ENCODE measurements at regions of chr2 and their contacts with region 1.

Region 1: DNA sequence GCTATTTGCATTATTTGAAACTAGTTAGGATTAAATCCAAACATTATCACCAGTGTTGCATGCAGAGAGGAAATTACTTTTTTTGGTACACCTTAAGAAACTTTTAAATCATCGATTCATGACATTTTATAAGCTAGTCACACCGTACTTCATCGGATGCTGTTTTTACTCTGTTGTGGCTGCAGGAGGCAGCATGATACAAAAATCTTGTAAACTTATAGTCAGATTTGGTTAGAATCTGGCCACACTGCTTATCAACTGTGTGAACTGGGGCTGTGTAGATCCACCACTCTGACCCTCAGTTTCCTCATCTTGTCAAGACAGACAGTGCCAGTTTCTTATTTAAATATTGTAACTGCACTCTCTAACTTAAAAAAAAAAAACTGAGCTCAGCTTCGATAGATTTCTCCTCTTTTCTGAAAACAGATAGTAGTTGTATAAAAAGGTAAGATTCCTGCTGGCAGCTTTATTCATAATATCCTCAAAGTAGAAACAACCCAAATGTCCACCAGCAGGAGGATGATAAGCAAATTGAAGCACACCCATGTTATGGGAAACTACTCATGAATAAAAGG is 77.8 kb downstream of the RAPGEF4 start:
- DNase-seq: peak in 1 of 2 donors; percentile 23
- ATAC-seq: peak in 7 of 8 donors; percentile 55 to 88 (median 67)
- H3K4me3 ChIP-seq: no peak overlapping the region
- H3K27ac ChIP-seq: no peak overlapping the region
- H3K4me1 ChIP-seq: peaks cover 0 to 5% (median 0%) of the 10 kb centered on the region in 9 donors
- H3K27me3 ChIP-seq: peaks cover 0 to 12% (median 0%) of the 10 kb centered on the region in 7 donors
- CTCF ChIP-seq: peak; percentile 29 to 79 (median 56)

Region 2: DNA sequence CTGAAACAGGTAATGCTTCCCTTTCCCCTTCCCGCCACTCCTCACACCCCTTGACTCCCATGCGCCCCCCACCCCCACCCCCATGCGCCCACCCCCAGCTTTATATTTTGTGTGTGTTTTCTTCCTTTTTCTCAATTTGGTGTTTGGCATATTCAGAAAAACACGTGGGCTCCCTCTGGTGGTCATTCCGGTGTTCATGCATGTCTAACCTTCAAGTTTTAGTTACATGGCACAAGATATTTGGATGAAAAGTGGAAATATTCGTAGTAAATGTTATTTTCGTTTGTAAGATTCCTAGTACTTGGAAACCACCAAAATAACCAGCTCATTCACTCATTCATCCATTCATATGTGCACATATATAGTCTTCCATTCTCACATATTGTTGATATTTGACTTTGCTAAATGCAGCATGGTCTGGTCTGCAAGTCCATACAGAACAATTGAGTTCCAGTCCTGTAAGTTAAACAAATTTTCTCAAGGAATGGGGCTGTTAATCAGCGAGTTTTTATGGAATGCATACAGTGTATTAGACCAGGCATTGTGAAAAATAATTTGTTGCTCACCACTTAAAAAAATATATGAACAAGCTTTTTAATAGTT is 118.6 kb after region 1 on chr2:
- intact Hi-C with region 1: loop called in 9 of 10 experiments (anchors 1 to 5 kb)
- DNase-seq: peak; percentile 52 to 79
- ATAC-seq: peak in 7 of 8 donors; percentile 30 to 75 (median 37)
- H3K4me3 ChIP-seq: peak overlapping the region in 6 of 10 donors; percentile 3 to 33 (median 26)
- H3K27ac ChIP-seq: peak overlapping the region in 9 of 10 donors; percentile 2 to 82 (median 63)
- H3K4me1 ChIP-seq: peaks cover 3 to 49% (median 40%) of the 10 kb centered on the region in 9 donors
- H3K27me3 ChIP-seq: no peaks in the 10 kb centered on the region
- CTCF ChIP-seq: peak; percentile 65 to 82 (median 74)

Region 3: DNA sequence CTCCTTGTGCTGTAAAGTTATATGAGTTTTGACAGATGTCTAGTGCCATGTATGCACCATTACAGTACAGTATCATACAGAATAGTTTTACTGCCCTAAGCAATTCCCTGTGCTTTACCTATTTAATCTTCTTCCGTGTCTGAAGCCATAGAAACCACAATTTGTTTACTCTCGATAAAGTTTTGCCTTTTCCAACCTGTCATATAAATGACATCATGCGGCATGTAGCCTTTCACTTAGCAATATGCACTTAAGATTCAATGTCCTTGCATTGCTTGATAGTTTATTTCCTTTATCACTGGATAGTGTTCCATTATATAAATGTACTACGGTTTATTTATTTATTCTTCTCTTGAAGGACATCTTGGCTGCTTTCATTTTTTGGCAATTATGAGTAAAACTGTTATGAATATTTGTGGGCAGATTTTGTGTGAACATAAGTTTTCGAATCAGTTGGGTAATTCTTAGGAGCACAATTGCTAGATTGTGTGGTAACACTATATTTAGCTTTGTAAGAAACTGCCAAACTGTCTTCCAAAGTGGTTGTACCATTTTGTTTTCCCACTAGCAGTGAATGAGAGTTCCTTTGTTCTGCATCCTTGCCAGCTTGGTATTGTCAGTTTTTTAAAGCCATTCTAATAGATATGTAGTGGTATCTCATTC is 125.4 kb after region 1 on chr2:
- intact Hi-C with region 1: loop called in 4 of 10 experiments (anchors 2 to 5 kb)
- DNase-seq: no peak
- ATAC-seq: no peak
- H3K4me3 ChIP-seq: no peak overlapping the region
- H3K27ac ChIP-seq: no peak overlapping the region
- H3K4me1 ChIP-seq: no peaks in the 10 kb centered on the region
- H3K27me3 ChIP-seq: no peaks in the 10 kb centered on the region
- CTCF ChIP-seq: no peak